HepG2 (cell line): ENCODE measurements at regions of chr15 and their contacts with region 1.

Region 1: GRCh38 chr15:59594493-59594942 is 17.1 kb upstream of the GCNT3 start:
- DNase-seq: peak; percentile 84
- ATAC-seq: peak; percentile 85
- H3K4me3 ChIP-seq: 0 out of 6 replicates have a peak overlapping the region, but pooled peaks of 1 of the 3 experiments have one; percentile 49
- H3K27ac ChIP-seq: peak overlapping the region; percentile 56
- H3K4me1 ChIP-seq: peaks cover 39% of the 10 kb centered on the region
- H3K27me3 ChIP-seq: no peaks in the 10 kb centered on the region
- CTCF ChIP-seq: no peak
- EP300 ChIP-seq: peak in 1 of 2 experiments; percentile 41; a peak in 1 of 4 replicates
- POLR2A ChIP-seq: no peak; a peak in 1 of 4 replicates
- RAD21 ChIP-seq: no peak

Region 2: GRCh38 chr15:59553879-59554735 is 40.4 kb before region 1 on chr15:
- CTCF ChIA-PET with region 1: no interaction called
- POLR2A ChIA-PET with region 1: interaction called, 9 read pairs
- in situ Hi-C with region 1: no loop called
- intact Hi-C with region 1: loop called (anchors 1 kb)
- DNase-seq: peak; percentile 100
- ATAC-seq: peak; percentile 97
- H3K4me3 ChIP-seq: peak overlapping the region in 1 of 3 experiments; percentile 9; a peak in 1 of 6 replicates
- H3K27ac ChIP-seq: peak overlapping the region; percentile 55
- H3K4me1 ChIP-seq: peaks cover 82% of the 10 kb centered on the region
- H3K27me3 ChIP-seq: peaks cover 1 to 5% of the 10 kb centered on the region in 2 experiments; a peak in 1 of 5 replicates
- CTCF ChIP-seq: no peak
- EP300 ChIP-seq: peak; percentile 84 to 97; a peak in 3 of 4 replicates
- POLR2A ChIP-seq: no peak
- RAD21 ChIP-seq: no peak